IMR-90 (cell line): ENCODE measurements at regions of chr2 and their contacts with region 1.

Region 1: DNA sequence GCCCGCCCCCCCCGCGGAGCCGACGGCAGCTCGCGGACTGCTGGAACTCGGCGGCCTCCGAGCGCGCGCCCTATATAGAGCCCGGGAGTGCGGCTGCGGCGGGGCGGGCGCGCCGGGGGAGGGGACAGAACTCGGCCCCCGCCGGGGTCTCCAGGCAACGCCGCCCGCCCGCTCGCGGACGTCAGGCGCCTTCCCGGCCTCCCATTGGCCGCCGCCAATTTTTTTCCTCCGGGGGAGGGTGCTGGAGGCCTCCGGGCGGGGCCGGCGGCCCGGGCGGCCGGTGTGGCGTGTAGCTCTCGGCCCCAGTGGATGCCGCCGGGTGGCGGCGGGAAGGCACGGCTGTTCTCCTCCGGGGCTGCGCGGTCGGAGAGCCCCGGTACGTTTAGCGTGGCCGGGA is at the start of gene ZFP36L2:
- DNase-seq: peak; percentile 93
- ATAC-seq: peak; percentile 73
- H3K4me3 ChIP-seq: peak within 1 kb of the TSS; percentile 87
- H3K27ac ChIP-seq: peak within 1 kb of the TSS; percentile 96
- H3K4me1 ChIP-seq: peaks cover 8% of the 10 kb centered on the region
- H3K27me3 ChIP-seq: no peaks in the 10 kb centered on the region
- CTCF ChIP-seq: peak; percentile 19; the same call in 1 of the 2 replicates
- POLR2A ChIP-seq: peak; percentile 97
- RAD21 ChIP-seq: peak; percentile 14; the same call in 1 of the 2 replicates
- total RNA-seq, gene ZFP36L2: 1.8 and 2.2 TPM in 2 replicates

Region 2: GRCh38 chr2:42859006-42859552 is 367.5 kb before region 1 on chr2:
- CTCF ChIA-PET with region 1: interaction called, 3 read pairs
- POLR2A ChIA-PET with region 1: interaction called, 6 read pairs
- dilution Hi-C with region 1: no loop called
- in situ Hi-C with region 1: loop called (anchors 10 kb)
- intact Hi-C with region 1: loop called (anchors 1 kb)
- DNase-seq: peak; percentile 81
- ATAC-seq: peak; percentile 81
- H3K4me3 ChIP-seq: no peak overlapping the region
- H3K27ac ChIP-seq: no peak overlapping the region
- H3K4me1 ChIP-seq: peaks cover 5% of the 10 kb centered on the region
- H3K27me3 ChIP-seq: no peaks in the 10 kb centered on the region
- CTCF ChIP-seq: peak; percentile 93
- POLR2A ChIP-seq: no peak
- RAD21 ChIP-seq: peak; percentile 95

Region 3: DNA sequence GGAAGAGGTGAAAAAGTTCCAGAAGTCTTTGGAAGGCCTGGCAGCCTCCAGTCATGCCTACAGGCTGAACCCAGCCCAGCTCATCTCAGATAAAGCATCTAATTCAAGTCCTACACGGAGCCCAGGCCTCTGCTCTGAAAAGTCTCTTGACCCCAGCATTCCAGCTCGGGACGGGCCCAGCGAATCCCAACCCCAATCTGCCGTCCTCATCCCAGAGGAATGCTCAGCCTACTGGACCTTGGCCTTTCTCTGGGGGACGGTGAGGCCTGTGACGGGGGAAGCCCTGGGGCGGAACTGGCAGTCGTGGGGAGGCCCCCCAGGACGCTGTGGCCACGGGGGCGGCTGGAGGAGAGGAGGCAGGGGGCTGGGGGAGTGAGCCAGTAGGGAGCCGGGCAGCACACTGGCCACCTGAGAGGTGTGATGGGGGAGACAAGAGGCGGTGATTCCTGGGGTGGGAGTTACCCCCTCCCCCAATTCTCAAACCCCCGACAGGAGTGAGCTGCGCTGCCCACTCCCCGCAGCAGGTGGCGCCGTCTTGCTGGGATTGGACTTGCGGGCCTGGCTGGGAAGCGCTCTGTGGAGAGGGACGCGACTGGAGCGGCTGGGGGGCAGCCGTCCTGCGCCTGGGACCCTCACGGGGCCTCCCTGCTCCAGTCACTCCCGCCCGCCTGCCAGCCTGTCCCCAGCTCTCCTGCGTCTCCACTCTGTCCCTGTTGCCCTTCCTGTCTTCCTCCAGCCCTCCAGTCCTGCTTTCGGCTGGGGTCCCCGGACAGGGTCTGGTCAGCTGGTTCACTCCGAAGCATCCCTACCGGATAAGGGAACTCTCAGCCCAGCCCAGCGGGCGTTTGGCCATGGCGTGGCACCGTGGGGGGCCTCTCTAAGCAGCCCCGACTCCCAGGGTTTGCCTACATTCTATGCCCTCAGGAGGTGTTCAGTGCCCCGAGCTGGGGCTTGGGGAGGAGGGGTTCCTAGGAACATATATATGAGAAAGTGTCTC is 251.5 kb before region 1 on chr2:
- CTCF ChIA-PET with region 1: interaction called, 8 read pairs
- POLR2A ChIA-PET with region 1: interaction called, 3 read pairs
- dilution Hi-C with region 1: no loop called
- in situ Hi-C with region 1: loop called (anchors 10 kb)
- intact Hi-C with region 1: loop called (anchors 1 kb)
- DNase-seq: peak; percentile 63
- ATAC-seq: peak; percentile 91
- H3K4me3 ChIP-seq: peak overlapping the region; percentile 15; the same call in 1 of the 2 replicates
- H3K27ac ChIP-seq: peak overlapping the region; percentile 79
- H3K4me1 ChIP-seq: peaks cover 20% of the 10 kb centered on the region
- H3K27me3 ChIP-seq: no peaks in the 10 kb centered on the region
- CTCF ChIP-seq: peak; percentile 88
- POLR2A ChIP-seq: peak; percentile 54; the same call in 1 of the 2 replicates
- RAD21 ChIP-seq: peak; percentile 97

Region 4: DNA sequence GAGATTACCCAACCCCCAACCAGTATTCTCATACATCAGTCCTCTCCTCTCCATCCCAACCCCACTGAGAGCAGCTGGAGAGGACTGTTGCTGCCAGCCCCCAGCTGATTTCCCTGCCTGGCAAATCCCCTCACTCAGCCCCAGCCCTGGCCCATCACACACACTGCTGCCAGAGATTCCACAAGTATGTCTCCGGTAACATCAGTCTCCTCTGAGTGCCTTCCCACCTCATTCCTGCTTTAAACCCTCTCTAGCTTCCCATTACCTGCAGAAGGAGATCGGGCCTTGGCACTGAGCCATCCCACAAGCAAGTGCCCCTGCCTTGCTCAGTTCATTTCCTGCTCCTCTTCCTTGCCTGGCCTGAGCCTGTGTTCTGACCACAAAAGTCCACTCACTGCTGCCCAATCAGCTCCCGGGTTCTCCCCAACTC is 50.4 kb after region 1 on chr2:
- CTCF ChIA-PET with region 1: no interaction called
- POLR2A ChIA-PET with region 1: no interaction called
- dilution Hi-C with region 1: no loop called
- in situ Hi-C with region 1: no loop called
- intact Hi-C with region 1: no loop called
- DNase-seq: no peak
- ATAC-seq: no peak
- H3K4me3 ChIP-seq: no peak overlapping the region
- H3K27ac ChIP-seq: no peak overlapping the region
- H3K4me1 ChIP-seq: peaks cover 14% of the 10 kb centered on the region; the same call in 1 of the 2 replicates
- H3K27me3 ChIP-seq: no peaks in the 10 kb centered on the region
- CTCF ChIP-seq: no peak
- POLR2A ChIP-seq: no peak
- RAD21 ChIP-seq: no peak

Region 5: GRCh38 chr2:43343573-43344304 is 117.2 kb after region 1 on chr2:
- CTCF ChIA-PET with region 1: no interaction called
- POLR2A ChIA-PET with region 1: interaction called, 3 read pairs
- dilution Hi-C with region 1: no loop called
- in situ Hi-C with region 1: no loop called
- intact Hi-C with region 1: loop called (anchors 5 kb)
- DNase-seq: peak; percentile 97
- ATAC-seq: peak; percentile 69
- H3K4me3 ChIP-seq: no peak overlapping the region
- H3K27ac ChIP-seq: peak overlapping the region; percentile 92; the same call in 1 of the 2 replicates
- H3K4me1 ChIP-seq: peaks cover 39% of the 10 kb centered on the region
- H3K27me3 ChIP-seq: no peaks in the 10 kb centered on the region
- CTCF ChIP-seq: no peak
- POLR2A ChIP-seq: no peak
- RAD21 ChIP-seq: no peak

Region 6: DNA sequence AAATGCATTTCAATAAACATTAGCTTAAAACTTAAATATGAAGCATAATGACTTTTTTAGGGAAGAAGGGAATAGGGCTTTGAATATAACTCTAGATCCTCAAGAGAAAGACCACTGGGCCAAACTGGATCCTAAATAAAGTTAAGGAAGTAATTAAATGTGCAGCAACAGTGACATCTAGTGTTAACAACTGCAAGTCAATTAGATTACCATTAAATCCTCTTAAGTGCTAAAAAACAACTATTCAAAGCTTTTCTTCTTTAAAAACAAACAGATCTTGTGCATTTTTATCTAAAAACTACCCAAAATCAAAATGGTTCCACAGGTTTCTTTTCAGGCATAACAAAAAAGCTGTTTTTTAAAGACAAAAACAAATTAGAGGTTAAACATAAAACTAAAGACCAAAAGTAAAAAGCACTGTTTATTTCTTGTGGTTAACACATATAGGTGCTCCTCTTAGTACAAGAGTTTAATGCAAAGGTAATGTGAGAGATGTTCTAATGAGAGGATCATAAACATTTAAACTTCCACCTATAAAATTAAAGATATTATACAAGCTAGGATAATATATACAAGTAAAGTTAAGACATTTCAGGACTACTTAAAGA is 257.9 kb after region 1 on chr2:
- CTCF ChIA-PET with region 1: interaction called, 3 read pairs
- POLR2A ChIA-PET with region 1: interaction called, 4 read pairs
- dilution Hi-C with region 1: no loop called
- in situ Hi-C with region 1: loop called (anchors 5 kb)
- intact Hi-C with region 1: loop called (anchors 1 kb)
- DNase-seq: peak; percentile 85
- ATAC-seq: peak; percentile 73
- H3K4me3 ChIP-seq: no peak overlapping the region
- H3K27ac ChIP-seq: no peak overlapping the region
- H3K4me1 ChIP-seq: no peaks in the 10 kb centered on the region
- H3K27me3 ChIP-seq: no peaks in the 10 kb centered on the region
- CTCF ChIP-seq: peak; percentile 65
- POLR2A ChIP-seq: no peak
- RAD21 ChIP-seq: peak; percentile 82